ENCODE measurements at regions of chr1 and their contacts with region 1.

Region 1: GRCh38 chr1:31789259-31790065 is 25.3 kb upstream of the ADGRB2 start:
- DNase-seq: peak; percentile 98
- H3K4me3 Mint-ChIP-seq: peak overlapping the region; percentile 80
- H3K27ac Mint-ChIP-seq: no peak overlapping the region
- H3K4me1 Mint-ChIP-seq: peaks cover 13% of the 10 kb centered on the region
- H3K27me3 Mint-ChIP-seq: no peaks in the 10 kb centered on the region

Region 2: DNA sequence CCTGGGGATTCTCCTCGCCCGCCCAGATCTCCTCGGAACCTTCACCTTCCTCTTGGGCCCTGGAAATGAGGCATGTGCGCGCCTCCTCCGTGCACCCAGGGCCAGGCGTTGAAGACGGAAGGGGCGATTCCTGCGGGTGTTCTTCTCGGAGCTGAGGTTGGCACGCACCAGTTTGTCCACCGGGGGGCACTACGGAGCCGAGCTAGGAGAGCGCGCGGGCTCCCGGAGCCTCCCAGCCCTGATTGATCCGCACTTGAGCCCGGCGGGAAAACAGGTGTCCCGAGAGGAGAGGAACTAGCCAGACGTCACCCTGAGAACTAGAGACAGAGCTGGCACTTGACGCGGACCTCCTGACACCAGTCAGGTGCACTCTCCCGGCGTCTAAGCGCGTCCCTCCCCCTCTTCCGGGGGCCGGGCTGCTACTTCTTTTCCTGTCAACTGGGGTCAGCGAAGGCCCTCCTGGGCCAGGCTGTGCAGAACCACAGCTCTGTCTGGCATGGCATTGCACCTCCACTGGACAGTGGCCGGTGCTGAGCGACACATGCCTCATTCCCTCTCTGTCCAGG is 394.8 kb before region 1 on chr1:
- CTCF ChIA-PET with region 1: interaction called, 11 read pairs
- POLR2A ChIA-PET with region 1: no interaction called
- intact Hi-C with region 1: no loop called
- DNase-seq: peak; percentile 87
- H3K4me3 Mint-ChIP-seq: peak overlapping the region; percentile 75
- H3K27ac Mint-ChIP-seq: no peak overlapping the region
- H3K4me1 Mint-ChIP-seq: peaks cover 8% of the 10 kb centered on the region
- H3K27me3 Mint-ChIP-seq: peaks cover 4% of the 10 kb centered on the region

Region 3: GRCh38 chr1:31587720-31588394 is 201.6 kb before region 1 on chr1:
- CTCF ChIA-PET with region 1: interaction called, 4 read pairs
- POLR2A ChIA-PET with region 1: no interaction called
- intact Hi-C with region 1: loop called (anchors 1 kb)
- DNase-seq: peak; percentile 72
- H3K4me3 Mint-ChIP-seq: no peak overlapping the region
- H3K27ac Mint-ChIP-seq: no peak overlapping the region
- H3K4me1 Mint-ChIP-seq: peaks cover 2% of the 10 kb centered on the region
- H3K27me3 Mint-ChIP-seq: peaks cover 16% of the 10 kb centered on the region

Region 4: DNA sequence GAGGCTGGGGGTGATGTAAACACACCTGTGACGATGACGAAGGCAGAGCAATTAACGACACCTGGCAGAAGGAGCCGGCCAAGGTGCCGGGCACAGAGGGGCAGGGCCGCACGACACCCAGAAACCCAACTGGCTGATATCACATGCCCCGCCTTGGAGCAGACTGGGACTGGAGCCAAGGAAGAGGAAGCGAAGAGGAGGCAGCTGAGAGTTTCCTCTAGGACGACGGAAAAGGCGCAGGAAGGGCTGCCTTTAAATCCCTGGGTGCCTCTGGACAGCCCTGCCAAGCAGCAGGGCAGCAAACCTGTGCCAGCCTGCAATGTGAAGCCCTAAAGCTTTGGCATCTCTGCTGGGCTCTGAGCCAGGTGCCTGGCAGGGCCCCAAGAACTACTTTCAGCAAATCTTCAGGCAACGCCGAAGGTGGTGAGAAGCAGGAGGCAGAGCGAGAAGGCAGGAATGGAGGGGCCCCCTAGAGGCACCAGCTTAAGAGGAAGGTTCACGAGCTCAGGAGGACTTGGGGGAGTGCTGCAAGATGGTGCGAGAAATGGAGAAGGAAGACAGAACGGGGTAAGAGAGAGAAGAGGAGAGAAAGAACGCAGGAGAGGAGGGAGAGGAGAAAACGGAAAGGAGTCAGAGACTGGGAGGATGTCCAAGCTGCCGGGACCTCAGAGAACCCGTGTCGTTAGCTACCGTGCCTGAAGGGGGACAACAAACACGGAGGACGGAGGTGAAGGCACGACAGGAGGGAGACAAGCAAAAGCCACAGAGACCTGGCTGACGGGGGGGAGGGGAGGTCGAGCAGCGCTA is 119.5 kb before region 1 on chr1:
- CTCF ChIA-PET with region 1: interaction called, 139 read pairs
- POLR2A ChIA-PET with region 1: interaction called, 8 read pairs
- intact Hi-C with region 1: no loop called
- DNase-seq: peak; percentile 36
- H3K4me3 Mint-ChIP-seq: no peak overlapping the region
- H3K27ac Mint-ChIP-seq: no peak overlapping the region
- H3K4me1 Mint-ChIP-seq: peaks cover 11% of the 10 kb centered on the region
- H3K27me3 Mint-ChIP-seq: peaks cover 21% of the 10 kb centered on the region

Region 5: GRCh38 chr1:31745096-31745945 is 44.1 kb before region 1 on chr1:
- CTCF ChIA-PET with region 1: interaction called, 29 read pairs
- POLR2A ChIA-PET with region 1: no interaction called
- intact Hi-C with region 1: no loop called
- DNase-seq: peak; percentile 76
- H3K4me3 Mint-ChIP-seq: no peak overlapping the region
- H3K27ac Mint-ChIP-seq: no peak overlapping the region
- H3K4me1 Mint-ChIP-seq: peaks cover under 1% of the 10 kb centered on the region
- H3K27me3 Mint-ChIP-seq: peaks cover 1% of the 10 kb centered on the region

Region 6: DNA sequence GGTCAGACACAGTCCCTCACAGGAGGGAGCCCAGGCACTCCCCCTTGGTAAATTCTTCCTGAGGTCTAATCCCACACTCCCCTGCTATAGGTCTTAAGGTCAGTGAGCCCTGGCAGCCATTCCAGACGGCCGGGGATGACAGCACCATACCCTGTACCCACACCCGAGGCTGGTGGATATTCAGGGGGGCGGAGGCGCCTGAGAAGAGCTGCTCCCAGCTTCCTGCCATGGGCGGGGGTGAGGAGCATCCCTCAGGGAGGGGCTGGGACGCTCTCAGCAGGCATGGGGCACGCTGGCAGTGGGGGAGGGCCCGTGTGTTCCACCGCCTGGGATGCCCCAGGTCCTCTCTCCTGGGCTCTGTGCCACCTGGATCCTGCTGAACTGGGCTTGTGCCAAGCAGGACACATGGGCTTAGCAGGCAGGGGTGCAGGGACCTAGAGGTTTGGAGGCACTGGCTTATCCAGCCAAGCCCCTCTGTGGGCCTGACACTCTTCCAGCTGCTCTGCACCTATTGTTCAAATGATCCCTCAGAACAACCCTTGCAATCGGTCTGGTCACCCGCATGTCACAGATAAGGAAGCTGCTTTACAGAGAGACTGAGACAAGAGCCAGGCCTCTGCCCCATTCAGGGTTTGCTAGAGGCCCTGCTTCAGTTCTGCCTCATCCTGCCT is 19.6 kb before region 1 on chr1:
- CTCF ChIA-PET with region 1: interaction called, 17 read pairs
- POLR2A ChIA-PET with region 1: interaction called, 5 read pairs
- intact Hi-C with region 1: no loop called
- DNase-seq: no peak
- H3K4me3 Mint-ChIP-seq: no peak overlapping the region
- H3K27ac Mint-ChIP-seq: peak overlapping the region; percentile 69
- H3K4me1 Mint-ChIP-seq: peaks cover 56% of the 10 kb centered on the region
- H3K27me3 Mint-ChIP-seq: peaks cover 19% of the 10 kb centered on the region

Region 7: GRCh38 chr1:31866450-31867032 is 77.1 kb after region 1 on chr1:
- CTCF ChIA-PET with region 1: no interaction called
- POLR2A ChIA-PET with region 1: no interaction called
- intact Hi-C with region 1: no loop called
- DNase-seq: no peak
- H3K4me3 Mint-ChIP-seq: no peak overlapping the region
- H3K27ac Mint-ChIP-seq: no peak overlapping the region
- H3K4me1 Mint-ChIP-seq: peaks cover 3% of the 10 kb centered on the region
- H3K27me3 Mint-ChIP-seq: no peaks in the 10 kb centered on the region

Measured in activated CD4-positive, alpha-beta memory T cell treated with anti-CD3 and anti-CD28 coated beads for 36 hours (primary cell).